PC-9 (cell line): ENCODE measurements at regions of chr7 and their contacts with region 1.

Region 1: DNA sequence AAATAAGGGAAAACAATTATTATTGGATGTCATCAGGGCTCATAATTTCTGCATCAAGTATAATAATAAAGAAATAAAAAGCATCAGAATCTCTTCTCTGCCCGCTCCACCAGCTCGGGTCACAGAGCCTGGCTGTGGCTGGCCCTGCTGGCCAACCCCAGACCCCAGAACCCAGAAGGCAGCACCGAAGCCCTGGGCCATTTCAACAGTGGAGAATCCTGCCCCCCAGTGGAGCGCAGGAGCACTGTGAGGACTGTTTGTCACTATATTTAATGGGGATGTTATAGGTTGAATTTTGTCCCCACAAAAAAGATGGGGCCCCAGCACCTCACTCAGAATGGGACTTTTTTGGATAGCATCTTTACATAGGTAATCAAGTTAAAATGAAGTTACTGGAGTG is 27.3 kb downstream of the DENND11 start:
- DNase-seq: peak in 1 of 2 experiments; percentile 20
- H3K4me3 ChIP-seq: no peak overlapping the region
- H3K27ac ChIP-seq: no peak overlapping the region
- H3K4me1 ChIP-seq: no peaks in the 10 kb centered on the region; the same call in 1 of the 2 replicates
- H3K27me3 ChIP-seq: no peaks in the 10 kb centered on the region
- CTCF ChIP-seq: peak; percentile 53; the same call in 1 of the 2 replicates

Region 2: GRCh38 chr7:141701489-141702046 is 26.9 kb after region 1 on chr7:
- CTCF ChIA-PET with region 1: no interaction called
- POLR2A ChIA-PET with region 1: interaction called, 6 read pairs
- intact Hi-C with region 1: loop called (anchors 2 kb)
- DNase-seq: peak in 1 of 2 experiments; percentile 45
- H3K4me3 ChIP-seq: peak overlapping the region; percentile 84
- H3K27ac ChIP-seq: no peak overlapping the region
- H3K4me1 ChIP-seq: peaks cover 18% of the 10 kb centered on the region
- H3K27me3 ChIP-seq: no peaks in the 10 kb centered on the region
- CTCF ChIP-seq: no peak